ENCODE measurements at regions of chr17 and their contacts with region 1.

Region 1: GRCh38 chr17:28967221-28968140 is 16.2 kb upstream of the PHF12 start:
- DNase-seq: no peak
- H3K4me3 ChIP-seq: no peak overlapping the region
- H3K27ac ChIP-seq: no peak overlapping the region
- H3K4me1 ChIP-seq: peaks cover 4% of the 10 kb centered on the region
- H3K27me3 ChIP-seq: no peaks in the 10 kb centered on the region
- CTCF ChIP-seq: no peak
- POLR2A ChIP-seq: no peak

Region 2: DNA sequence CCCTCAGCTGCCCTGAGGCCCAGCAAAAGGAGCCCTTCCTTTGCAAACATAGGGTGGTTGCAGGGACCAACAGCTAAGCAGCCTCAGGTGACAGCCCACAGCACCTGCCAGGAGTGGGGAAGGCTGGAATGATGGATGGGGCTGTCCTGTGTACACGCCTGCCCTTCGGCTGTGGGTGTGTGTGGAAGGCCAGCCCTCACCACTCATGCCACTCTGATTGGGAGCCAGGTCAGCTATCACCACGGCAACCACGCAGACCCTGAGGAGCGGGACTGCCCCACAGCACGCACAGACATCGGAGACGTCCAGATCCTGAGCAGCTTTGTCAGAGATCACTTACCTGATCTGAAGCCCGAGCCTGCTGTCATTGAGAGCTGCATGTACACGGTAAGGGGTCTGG is 87.4 kb after region 1 on chr17:
- CTCF ChIA-PET with region 1: interaction called, 8 read pairs
- POLR2A ChIA-PET with region 1: no interaction called
- dilution Hi-C with region 1: no loop called
- intact Hi-C with region 1: loop called (anchors 5 kb)
- DNase-seq: no peak
- H3K4me3 ChIP-seq: no peak overlapping the region
- H3K27ac ChIP-seq: no peak overlapping the region
- H3K4me1 ChIP-seq: no peaks in the 10 kb centered on the region
- H3K27me3 ChIP-seq: peaks cover 4% of the 10 kb centered on the region in 2 experiments
- CTCF ChIP-seq: no peak
- POLR2A ChIP-seq: no peak

Region 3: DNA sequence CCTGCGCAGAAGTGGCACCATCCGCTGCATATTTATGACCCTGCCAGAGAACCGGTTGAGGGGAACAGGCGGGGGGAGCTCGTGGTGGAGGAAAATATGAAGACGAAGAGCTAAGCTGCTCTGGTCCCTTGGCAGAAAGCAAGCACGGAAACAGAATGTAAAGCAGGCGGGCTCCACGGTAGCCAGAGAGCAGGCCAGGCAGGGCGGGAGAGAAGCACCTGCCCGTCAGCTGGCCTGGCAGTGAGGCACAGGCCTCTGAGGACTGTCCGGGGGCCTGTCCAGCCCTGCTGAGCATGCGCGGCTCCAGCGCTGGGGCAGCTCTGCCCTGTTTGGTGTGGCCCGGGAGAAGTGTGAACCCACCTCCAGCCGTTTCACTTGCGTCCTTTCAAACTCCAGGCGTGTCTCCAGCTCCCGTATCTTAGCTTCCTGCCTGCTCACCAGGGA is 122.1 kb after region 1 on chr17:
- CTCF ChIA-PET with region 1: interaction called, 23 read pairs
- POLR2A ChIA-PET with region 1: no interaction called
- dilution Hi-C with region 1: no loop called
- intact Hi-C with region 1: no loop called
- DNase-seq: no peak
- H3K4me3 ChIP-seq: no peak overlapping the region
- H3K27ac ChIP-seq: no peak overlapping the region
- H3K4me1 ChIP-seq: no peaks in the 10 kb centered on the region
- H3K27me3 ChIP-seq: no peaks in the 10 kb centered on the region
- CTCF ChIP-seq: no peak
- POLR2A ChIP-seq: no peak

Region 4: GRCh38 chr17:29111816-29112499 is 144.5 kb after region 1 on chr17:
- CTCF ChIA-PET with region 1: interaction called, 1,079 read pairs
- POLR2A ChIA-PET with region 1: interaction called, 7 read pairs
- dilution Hi-C with region 1: no loop called
- intact Hi-C with region 1: loop called (anchors 1 kb)
- DNase-seq: peak; percentile 62
- H3K4me3 ChIP-seq: no peak overlapping the region
- H3K27ac ChIP-seq: no peak overlapping the region
- H3K4me1 ChIP-seq: peaks cover 3% of the 10 kb centered on the region
- H3K27me3 ChIP-seq: no peaks in the 10 kb centered on the region
- CTCF ChIP-seq: peak; percentile 85 to 98
- POLR2A ChIP-seq: no peak